RWPE1 (cell line): ENCODE measurements at regions of chr9 and their contacts with region 1.

Region 1: DNA sequence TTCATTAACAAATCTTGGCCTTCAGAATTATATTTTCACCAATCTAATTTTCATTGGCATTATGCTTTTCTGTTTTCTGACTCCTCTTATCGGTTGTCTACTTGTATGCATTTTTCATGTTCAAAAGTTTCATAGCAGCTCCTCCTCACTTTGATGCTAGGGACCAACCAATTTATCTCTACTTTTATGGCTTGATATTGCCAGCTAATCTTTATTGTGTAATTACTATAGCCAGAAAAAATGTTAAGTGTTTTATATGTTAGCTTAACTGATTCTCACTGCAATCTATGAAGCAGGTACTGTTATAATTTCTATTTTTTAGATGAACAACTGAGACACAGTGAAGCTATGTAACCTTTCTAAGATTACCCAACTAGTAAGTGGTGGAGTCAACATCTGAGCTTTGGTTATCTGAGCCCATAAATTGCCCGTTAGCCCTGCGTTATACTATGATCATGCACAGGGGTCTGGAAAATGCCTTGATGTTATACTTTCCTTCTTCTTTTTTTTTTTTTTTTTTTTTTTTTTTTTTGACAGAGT is 34.4 kb upstream of the TNC start:
- DNase-seq: no peak
- H3K27ac ChIP-seq: no peak overlapping the region
- CTCF ChIP-seq: no peak

Region 2: GRCh38 chr9:113533335-113534225 is 1618.8 kb before region 1 on chr9:
- CTCF ChIA-PET with region 1: interaction called, 10 read pairs
- POLR2A ChIA-PET with region 1: no interaction called
- DNase-seq: no peak
- H3K27ac ChIP-seq: no peak overlapping the region
- CTCF ChIP-seq: no peak

Region 3: GRCh38 chr9:114681594-114682332 is 470.6 kb before region 1 on chr9 and contains the start of gene TEX48:
- CTCF ChIA-PET with region 1: no interaction called
- POLR2A ChIA-PET with region 1: no interaction called
- DNase-seq: peak; percentile 78
- H3K27ac ChIP-seq: peak within 1 kb of the TSS; percentile 6; the same call in 1 of the 2 replicates
- CTCF ChIP-seq: peak; percentile 95

Region 4: GRCh38 chr9:115058684-115059315 is 93.6 kb before region 1 on chr9:
- CTCF ChIA-PET with region 1: no interaction called
- POLR2A ChIA-PET with region 1: no interaction called
- DNase-seq: peak; percentile 89
- H3K27ac ChIP-seq: no peak overlapping the region; the same call in 1 of the 2 replicates
- CTCF ChIP-seq: no peak

Region 5: GRCh38 chr9:115141612-115142011 is 10.7 kb before region 1 on chr9:
- CTCF ChIA-PET with region 1: no interaction called
- POLR2A ChIA-PET with region 1: no interaction called
- DNase-seq: no peak
- H3K27ac ChIP-seq: no peak overlapping the region
- CTCF ChIP-seq: no peak

Region 6: GRCh38 chr9:115198001-115198400 is 45.6 kb after region 1 on chr9:
- CTCF ChIA-PET with region 1: no interaction called
- POLR2A ChIA-PET with region 1: no interaction called
- DNase-seq: no peak
- H3K27ac ChIP-seq: no peak overlapping the region
- CTCF ChIP-seq: no peak